Activated CD4-positive, alpha-beta T cell treated with anti-CD3 and anti-CD28 coated beads for 36 hours (primary cell): ENCODE measurements at regions of chr15 and their contacts with region 1.

Region 1: DNA sequence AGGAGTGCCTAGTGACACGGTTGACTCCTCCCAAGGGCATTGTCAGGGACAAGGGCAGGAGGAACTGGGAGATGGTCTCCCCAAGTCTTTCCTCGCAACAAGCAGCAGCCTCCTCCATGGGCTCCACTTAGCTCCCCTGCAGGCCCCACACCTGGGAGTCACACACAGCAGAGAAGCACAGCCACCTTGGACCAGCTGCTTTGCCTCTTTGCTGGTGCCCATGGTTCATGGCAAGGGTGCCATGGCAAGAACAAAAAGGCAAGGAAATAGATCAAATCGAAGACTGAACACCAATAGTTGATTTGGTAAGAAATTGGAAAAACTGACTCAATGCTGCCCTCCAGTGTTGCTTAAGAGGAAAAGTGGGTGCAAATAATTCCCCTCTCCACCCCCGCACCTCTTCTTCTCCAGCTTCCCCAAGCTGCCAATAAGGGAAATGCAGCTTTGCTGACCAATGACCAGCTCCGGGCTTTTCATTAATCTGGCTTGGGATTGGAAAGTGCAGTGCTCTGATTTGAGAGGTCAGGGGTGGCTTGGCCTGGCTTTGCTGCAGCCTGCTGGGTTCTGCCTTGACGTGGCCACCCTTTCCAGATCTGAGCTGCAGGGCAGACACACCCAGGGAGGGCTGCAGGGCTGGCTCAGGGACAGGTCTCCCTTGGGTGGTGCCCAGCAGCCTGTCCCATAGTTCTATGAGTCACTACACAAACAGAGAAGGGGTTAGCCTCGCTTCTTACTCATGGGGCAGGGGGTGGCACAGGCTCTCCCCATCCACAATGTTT is 162.0 kb downstream of the KLF13 start:
- DNase-seq: peak; percentile 59
- ATAC-seq: peak; percentile 42
- H3K4me3 Mint-ChIP-seq: peak overlapping the region; percentile 21
- H3K27ac Mint-ChIP-seq: peak overlapping the region; percentile 79
- H3K4me1 Mint-ChIP-seq: peaks cover 55% of the 10 kb centered on the region
- H3K27me3 Mint-ChIP-seq: peaks cover 3% of the 10 kb centered on the region

Region 2: GRCh38 chr15:30903497-30904201 is 585.0 kb before region 1 on chr15 and contains the start of gene FAN1:
- CTCF ChIA-PET with region 1: no interaction called
- POLR2A ChIA-PET with region 1: no interaction called
- intact Hi-C with region 1: loop called in 1 of 2 experiments (anchors 10 kb)
- DNase-seq: peak; percentile 89
- ATAC-seq: peak; percentile 94
- H3K4me3 Mint-ChIP-seq: peak within 1 kb of the TSS; percentile 95
- H3K27ac Mint-ChIP-seq: peak within 1 kb of the TSS; percentile 89
- H3K4me1 Mint-ChIP-seq: peaks cover 23% of the 10 kb centered on the region
- H3K27me3 Mint-ChIP-seq: peaks cover 3% of the 10 kb centered on the region
- total RNA-seq, gene FAN1: 11.6 to 15.4 TPM

Region 3: GRCh38 chr15:31200735-31201151 is 287.9 kb before region 1 on chr15:
- CTCF ChIA-PET with region 1: interaction called, 19 read pairs
- POLR2A ChIA-PET with region 1: no interaction called
- intact Hi-C with region 1: loop called (anchors 1 kb)
- DNase-seq: peak; percentile 83
- ATAC-seq: peak; percentile 76
- H3K4me3 Mint-ChIP-seq: no peak overlapping the region
- H3K27ac Mint-ChIP-seq: peak overlapping the region; percentile 55
- H3K4me1 Mint-ChIP-seq: peaks cover 18% of the 10 kb centered on the region
- H3K27me3 Mint-ChIP-seq: no peaks in the 10 kb centered on the region

Region 4: DNA sequence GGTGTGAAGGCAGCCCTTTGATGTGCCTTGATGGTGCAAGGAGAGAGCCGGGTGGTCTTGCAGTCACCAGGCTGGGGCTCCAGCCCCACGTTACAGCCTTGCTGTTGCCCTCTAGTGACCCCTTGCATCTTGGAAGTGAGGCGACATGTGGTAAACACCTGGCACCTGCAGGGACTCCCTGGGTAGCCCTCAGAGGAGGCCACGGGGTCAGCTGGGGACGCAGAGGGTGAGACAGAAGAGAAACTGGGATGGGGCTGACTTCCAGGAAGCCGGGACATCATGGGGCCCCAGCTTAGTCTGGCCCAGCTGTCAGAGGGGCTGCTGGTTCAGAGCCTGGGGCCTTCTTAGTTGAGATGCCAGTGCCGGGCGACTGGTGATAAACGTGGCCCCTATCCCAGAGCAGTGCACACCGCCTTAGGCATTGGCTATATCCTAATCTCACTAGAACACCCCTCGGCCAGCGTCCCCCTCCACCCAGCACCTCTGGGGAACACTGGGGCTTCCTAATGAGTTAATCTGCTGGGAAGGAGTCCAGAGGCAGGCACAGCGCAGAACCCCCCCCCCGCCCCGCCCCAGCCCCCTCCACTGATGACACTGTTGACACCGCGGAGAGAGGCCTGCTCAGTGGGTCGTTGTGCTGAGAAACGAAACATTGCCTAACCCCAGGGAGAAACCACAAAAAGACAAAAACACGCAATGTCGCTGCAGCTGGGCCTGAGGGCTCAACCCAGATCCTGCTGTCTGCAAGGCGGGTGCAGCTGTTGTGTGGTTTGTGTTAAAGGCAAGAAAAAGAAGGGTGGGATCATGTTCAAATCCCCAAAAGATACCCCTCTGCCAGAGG is 222.5 kb before region 1 on chr15:
- CTCF ChIA-PET with region 1: interaction called, 27 read pairs
- POLR2A ChIA-PET with region 1: no interaction called
- intact Hi-C with region 1: no loop called
- DNase-seq: peak; percentile 78
- ATAC-seq: peak; percentile 75
- H3K4me3 Mint-ChIP-seq: peak overlapping the region; percentile 11
- H3K27ac Mint-ChIP-seq: peak overlapping the region; percentile 77
- H3K4me1 Mint-ChIP-seq: peaks cover 78% of the 10 kb centered on the region
- H3K27me3 Mint-ChIP-seq: peaks cover 2% of the 10 kb centered on the region

Region 5: GRCh38 chr15:31357148-31357752 is 131.4 kb before region 1 on chr15:
- CTCF ChIA-PET with region 1: interaction called, 26 read pairs
- POLR2A ChIA-PET with region 1: interaction called, 3 read pairs
- intact Hi-C with region 1: no loop called
- DNase-seq: peak; percentile 59
- ATAC-seq: no peak
- H3K4me3 Mint-ChIP-seq: peak overlapping the region; percentile 68
- H3K27ac Mint-ChIP-seq: peak overlapping the region; percentile 97
- H3K4me1 Mint-ChIP-seq: peaks cover 99% of the 10 kb centered on the region
- H3K27me3 Mint-ChIP-seq: no peaks in the 10 kb centered on the region

Region 6: GRCh38 chr15:31435261-31435911 is 53.2 kb before region 1 on chr15:
- CTCF ChIA-PET with region 1: interaction called, 137 read pairs
- POLR2A ChIA-PET with region 1: interaction called, 4 read pairs
- intact Hi-C with region 1: loop called (anchors 1 kb)
- DNase-seq: peak; percentile 92
- ATAC-seq: peak; percentile 73
- H3K4me3 Mint-ChIP-seq: peak overlapping the region; percentile 66
- H3K27ac Mint-ChIP-seq: peak overlapping the region; percentile 97
- H3K4me1 Mint-ChIP-seq: peaks cover 76% of the 10 kb centered on the region
- H3K27me3 Mint-ChIP-seq: no peaks in the 10 kb centered on the region

Region 7: GRCh38 chr15:31458591-31459399 is 29.8 kb before region 1 on chr15:
- CTCF ChIA-PET with region 1: interaction called, 16 read pairs
- POLR2A ChIA-PET with region 1: interaction called, 3 read pairs
- intact Hi-C with region 1: loop called (anchors 1 kb)
- DNase-seq: peak; percentile 83
- ATAC-seq: peak; percentile 93
- H3K4me3 Mint-ChIP-seq: peak overlapping the region; percentile 70
- H3K27ac Mint-ChIP-seq: peak overlapping the region; percentile 92
- H3K4me1 Mint-ChIP-seq: peaks cover 45% of the 10 kb centered on the region
- H3K27me3 Mint-ChIP-seq: no peaks in the 10 kb centered on the region